ENCODE measurements at regions of chr11 and their contacts with region 1.

Region 1: GRCh38 chr11:110376711-110377324 is 52.9 kb upstream of the FDX1 start:
- DNase-seq: peak; percentile 88 to 95
- H3K4me3 ChIP-seq: 0 out of 2 replicates have a peak overlapping the region, but pooled peaks have one; percentile 4
- H3K4me3 Mint-ChIP-seq: peak overlapping the region; percentile 61
- H3K27ac Mint-ChIP-seq: peak overlapping the region; percentile 34
- H3K4me1 ChIP-seq: peaks cover 45% of the 10 kb centered on the region
- H3K4me1 Mint-ChIP-seq: peaks cover 30% of the 10 kb centered on the region
- H3K27me3 ChIP-seq: no peaks in the 10 kb centered on the region
- H3K27me3 Mint-ChIP-seq: no peaks in the 10 kb centered on the region
- CTCF ChIP-seq: peak; percentile 93

Region 2: GRCh38 chr11:109853156-109853776 is 523.6 kb before region 1 on chr11:
- CTCF ChIA-PET with region 1: interaction called, 3 read pairs
- POLR2A ChIA-PET with region 1: no interaction called
- intact Hi-C with region 1: loop called (anchors 1 kb)
- DNase-seq: peak in 1 of 2 experiments; percentile 66
- H3K4me3 ChIP-seq: no peak overlapping the region
- H3K4me3 Mint-ChIP-seq: no peak overlapping the region
- H3K27ac Mint-ChIP-seq: no peak overlapping the region
- H3K4me1 ChIP-seq: no peaks in the 10 kb centered on the region
- H3K4me1 Mint-ChIP-seq: no peaks in the 10 kb centered on the region
- H3K27me3 ChIP-seq: peaks cover 1% of the 10 kb centered on the region; the same call in 1 of the 2 replicates
- H3K27me3 Mint-ChIP-seq: peaks cover 5% of the 10 kb centered on the region
- CTCF ChIP-seq: peak; percentile 86 to 87

Region 3: DNA sequence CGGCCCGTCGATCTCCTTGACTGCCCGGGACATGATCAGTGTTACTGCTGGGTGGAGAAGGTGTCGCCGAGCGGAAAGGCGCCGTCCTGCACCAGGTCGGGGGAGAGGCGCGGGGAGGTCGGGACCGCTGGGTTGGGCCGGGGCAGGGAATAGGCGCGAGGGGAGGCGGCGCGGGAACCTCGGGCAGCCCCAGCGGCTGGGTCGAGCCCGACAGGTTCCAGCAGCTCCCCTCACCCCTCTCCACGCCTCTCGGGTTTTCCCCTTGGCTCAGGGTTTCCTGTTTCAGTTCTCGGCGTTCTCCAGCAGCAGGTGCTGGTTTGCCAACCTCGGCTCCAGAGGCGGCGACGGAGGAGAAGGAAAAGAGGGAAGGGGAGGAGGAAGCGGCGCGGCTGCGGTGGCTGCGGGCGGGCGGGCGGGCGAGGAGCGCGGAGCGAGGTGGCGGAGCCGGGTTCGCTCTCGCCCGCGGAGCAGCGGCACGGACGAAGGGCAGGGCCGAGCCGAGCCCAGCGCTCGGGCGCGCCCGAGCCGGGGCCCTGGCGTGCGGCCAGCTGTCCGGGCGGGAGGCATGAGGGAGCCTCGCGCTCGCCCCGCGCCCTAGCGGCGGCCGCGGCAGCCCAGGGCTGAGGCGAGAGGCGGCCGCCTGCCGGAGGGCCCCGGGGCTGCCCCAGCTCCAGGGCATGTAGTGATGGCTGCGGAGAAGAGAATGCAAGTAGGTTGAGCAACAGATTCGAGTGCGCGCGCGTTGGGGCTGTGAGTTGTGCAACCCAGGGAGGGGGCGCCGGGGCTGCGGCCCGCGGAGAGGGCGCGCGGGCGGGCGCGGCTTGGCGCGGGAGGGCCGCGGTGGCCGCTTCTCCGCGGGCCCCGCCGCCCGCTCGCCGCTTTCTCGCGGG is 284.1 kb before region 1 on chr11 and contains the start of gene ZC3H12C:
- CTCF ChIA-PET with region 1: no interaction called
- POLR2A ChIA-PET with region 1: no interaction called
- intact Hi-C with region 1: loop called (anchors 2 kb)
- DNase-seq: peak; percentile 97
- H3K4me3 ChIP-seq: peak within 1 kb of the TSS; percentile 79
- H3K4me3 Mint-ChIP-seq: peak within 1 kb of the TSS; percentile 95
- H3K27ac Mint-ChIP-seq: peak within 1 kb of the TSS; percentile 94
- H3K4me1 ChIP-seq: peaks cover 17% of the 10 kb centered on the region
- H3K4me1 Mint-ChIP-seq: peaks cover 6% of the 10 kb centered on the region
- H3K27me3 ChIP-seq: 0 out of 2 replicates have a peak, but pooled peaks cover 1% of the 10 kb centered on the region
- H3K27me3 Mint-ChIP-seq: no peaks in the 10 kb centered on the region
- CTCF ChIP-seq: peak in 1 of 2 experiments; percentile 73
- total RNA-seq, gene ZC3H12C: 11.4 and 11.7 TPM in 2 replicates

Region 4: DNA sequence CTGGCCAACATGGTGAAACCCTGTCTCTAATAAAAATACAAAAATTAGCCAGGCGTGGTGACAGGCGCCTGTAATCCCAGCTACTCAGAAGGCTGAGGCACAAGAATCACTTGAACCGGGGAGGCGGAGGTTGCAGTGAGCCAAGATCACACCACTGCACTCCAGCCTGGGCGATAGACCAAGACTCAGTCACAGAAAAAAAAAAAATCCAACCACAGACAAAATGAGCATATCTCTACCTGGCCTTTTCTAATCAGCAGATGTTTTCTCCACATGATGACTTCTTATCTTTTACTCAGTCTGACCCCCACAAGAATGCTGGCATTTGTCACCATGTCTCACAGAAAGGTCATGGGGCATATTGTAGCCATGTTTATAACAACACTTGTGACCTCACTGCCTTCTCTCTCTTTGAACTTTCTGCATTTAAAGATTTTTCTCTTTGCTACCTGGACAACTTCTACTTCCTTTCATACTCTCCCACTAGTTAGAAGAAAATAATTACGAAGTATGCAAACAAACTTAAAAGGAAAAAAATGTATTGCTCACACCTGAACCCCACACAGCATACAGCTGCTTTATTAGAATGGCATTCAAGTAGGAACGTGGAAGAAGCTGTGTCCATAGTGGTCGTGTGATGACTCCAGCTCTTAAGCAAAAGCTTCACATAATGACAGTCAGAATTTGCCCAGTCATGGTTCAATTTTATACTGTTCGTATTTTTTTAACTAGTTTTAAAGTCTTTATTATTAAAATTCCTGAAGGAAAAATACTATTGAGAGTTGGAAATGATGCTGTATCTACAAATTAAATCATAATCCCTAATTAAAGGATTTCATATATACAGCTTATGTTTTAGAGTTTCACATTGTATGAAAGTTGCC is 218.3 kb before region 1 on chr11:
- CTCF ChIA-PET with region 1: no interaction called
- POLR2A ChIA-PET with region 1: no interaction called
- intact Hi-C with region 1: no loop called
- DNase-seq: peak in 1 of 2 experiments; percentile 46
- H3K4me3 ChIP-seq: no peak overlapping the region
- H3K4me3 Mint-ChIP-seq: no peak overlapping the region
- H3K27ac Mint-ChIP-seq: peak overlapping the region; percentile 19
- H3K4me1 ChIP-seq: peaks cover 11% of the 10 kb centered on the region
- H3K4me1 Mint-ChIP-seq: peaks cover 16% of the 10 kb centered on the region
- H3K27me3 ChIP-seq: no peaks in the 10 kb centered on the region
- H3K27me3 Mint-ChIP-seq: no peaks in the 10 kb centered on the region
- CTCF ChIP-seq: no peak

Region 5: GRCh38 chr11:110207123-110207522 is 169.7 kb before region 1 on chr11:
- CTCF ChIA-PET with region 1: interaction called, 3 read pairs
- POLR2A ChIA-PET with region 1: no interaction called
- intact Hi-C with region 1: loop called (anchors 1 kb)
- DNase-seq: no peak
- H3K4me3 ChIP-seq: no peak overlapping the region
- H3K4me3 Mint-ChIP-seq: no peak overlapping the region
- H3K27ac Mint-ChIP-seq: no peak overlapping the region
- H3K4me1 ChIP-seq: no peaks in the 10 kb centered on the region; the same call in 1 of the 2 replicates
- H3K4me1 Mint-ChIP-seq: peaks cover 11% of the 10 kb centered on the region
- H3K27me3 ChIP-seq: no peaks in the 10 kb centered on the region
- H3K27me3 Mint-ChIP-seq: no peaks in the 10 kb centered on the region
- CTCF ChIP-seq: no peak

Region 6: GRCh38 chr11:110261195-110262140 is 115.3 kb before region 1 on chr11:
- CTCF ChIA-PET with region 1: no interaction called
- POLR2A ChIA-PET with region 1: no interaction called
- intact Hi-C with region 1: loop called (anchors 2 kb)
- DNase-seq: no peak
- H3K4me3 ChIP-seq: no peak overlapping the region
- H3K4me3 Mint-ChIP-seq: no peak overlapping the region
- H3K27ac Mint-ChIP-seq: no peak overlapping the region
- H3K4me1 ChIP-seq: no peaks in the 10 kb centered on the region
- H3K4me1 Mint-ChIP-seq: peaks cover 9% of the 10 kb centered on the region
- H3K27me3 ChIP-seq: no peaks in the 10 kb centered on the region
- H3K27me3 Mint-ChIP-seq: no peaks in the 10 kb centered on the region
- CTCF ChIP-seq: no peak

Region 7: GRCh38 chr11:110356756-110357671 is 19.8 kb before region 1 on chr11:
- CTCF ChIA-PET with region 1: no interaction called
- POLR2A ChIA-PET with region 1: no interaction called
- intact Hi-C with region 1: loop called (anchors 1 kb)
- DNase-seq: peak; percentile 77 to 86
- H3K4me3 ChIP-seq: no peak overlapping the region
- H3K4me3 Mint-ChIP-seq: peak overlapping the region; percentile 29
- H3K27ac Mint-ChIP-seq: peak overlapping the region; percentile 73
- H3K4me1 ChIP-seq: peaks cover 38% of the 10 kb centered on the region
- H3K4me1 Mint-ChIP-seq: peaks cover 43% of the 10 kb centered on the region
- H3K27me3 ChIP-seq: no peaks in the 10 kb centered on the region
- H3K27me3 Mint-ChIP-seq: no peaks in the 10 kb centered on the region
- CTCF ChIP-seq: no peak

Region 8: GRCh38 chr11:110409174-110409573 is 32.4 kb after region 1 on chr11:
- CTCF ChIA-PET with region 1: interaction called, 3 read pairs
- POLR2A ChIA-PET with region 1: no interaction called
- intact Hi-C with region 1: loop called (anchors 1 kb)
- DNase-seq: no peak
- H3K4me3 ChIP-seq: no peak overlapping the region
- H3K4me3 Mint-ChIP-seq: no peak overlapping the region
- H3K27ac Mint-ChIP-seq: no peak overlapping the region
- H3K4me1 ChIP-seq: peaks cover 13% of the 10 kb centered on the region
- H3K4me1 Mint-ChIP-seq: peaks cover 14% of the 10 kb centered on the region
- H3K27me3 ChIP-seq: no peaks in the 10 kb centered on the region
- H3K27me3 Mint-ChIP-seq: no peaks in the 10 kb centered on the region
- CTCF ChIP-seq: no peak

Region 9: DNA sequence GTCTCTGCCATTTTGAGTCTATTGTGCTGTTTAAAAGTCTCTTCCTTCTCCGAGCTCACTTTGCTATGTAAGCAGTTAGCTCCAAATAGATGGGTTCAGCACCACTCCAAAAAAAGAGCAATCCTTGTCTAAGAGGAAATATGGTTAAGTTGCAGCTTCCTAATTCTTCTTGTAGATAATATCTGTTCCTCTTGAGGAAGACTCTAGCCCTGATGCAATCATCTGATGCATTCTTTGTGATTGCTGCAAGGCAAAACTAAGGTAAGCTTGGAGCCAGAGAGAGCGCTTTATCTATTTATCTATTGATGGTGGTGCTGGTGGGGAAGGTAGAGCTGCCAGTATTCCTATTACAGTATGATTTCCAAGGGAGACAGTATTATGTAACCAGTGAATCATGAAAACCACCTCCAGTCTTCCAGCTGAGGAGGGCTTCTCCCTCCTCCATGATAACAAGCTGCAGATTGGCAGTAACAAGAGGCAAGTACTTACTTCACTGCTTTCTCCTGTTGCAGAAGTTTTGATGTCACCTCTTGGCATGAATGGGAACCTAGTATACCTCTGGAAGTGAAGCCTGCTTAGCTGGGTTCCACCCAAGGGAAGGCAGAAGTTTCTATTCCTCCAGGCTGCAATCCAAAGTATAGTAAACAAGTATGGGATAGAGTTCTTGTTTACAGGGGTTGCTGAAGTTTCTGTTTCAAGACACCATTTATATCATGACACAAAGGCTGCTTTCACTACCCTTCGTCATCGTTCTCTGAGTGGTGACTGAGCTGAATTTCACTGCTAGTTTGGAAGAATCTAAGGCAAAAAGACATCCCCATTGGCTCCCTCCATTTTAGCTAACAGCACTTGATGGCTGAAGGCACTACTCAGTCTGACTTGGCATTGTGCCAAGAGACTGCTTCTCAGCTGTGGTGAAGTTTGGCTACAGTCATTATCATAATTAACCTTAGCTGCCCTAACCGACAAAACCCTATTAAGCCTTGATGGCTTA is 102.6 kb after region 1 on chr11:
- CTCF ChIA-PET with region 1: no interaction called
- POLR2A ChIA-PET with region 1: no interaction called
- intact Hi-C with region 1: no loop called
- DNase-seq: no peak
- H3K4me3 ChIP-seq: no peak overlapping the region
- H3K4me3 Mint-ChIP-seq: no peak overlapping the region
- H3K27ac Mint-ChIP-seq: no peak overlapping the region
- H3K4me1 ChIP-seq: no peaks in the 10 kb centered on the region
- H3K4me1 Mint-ChIP-seq: no peaks in the 10 kb centered on the region
- H3K27me3 ChIP-seq: no peaks in the 10 kb centered on the region
- H3K27me3 Mint-ChIP-seq: peaks cover under 1% of the 10 kb centered on the region
- CTCF ChIP-seq: no peak